CD4-positive, alpha-beta T cell (primary cell): ENCODE measurements at regions of chr9 and their contacts with region 1.

Region 1: DNA sequence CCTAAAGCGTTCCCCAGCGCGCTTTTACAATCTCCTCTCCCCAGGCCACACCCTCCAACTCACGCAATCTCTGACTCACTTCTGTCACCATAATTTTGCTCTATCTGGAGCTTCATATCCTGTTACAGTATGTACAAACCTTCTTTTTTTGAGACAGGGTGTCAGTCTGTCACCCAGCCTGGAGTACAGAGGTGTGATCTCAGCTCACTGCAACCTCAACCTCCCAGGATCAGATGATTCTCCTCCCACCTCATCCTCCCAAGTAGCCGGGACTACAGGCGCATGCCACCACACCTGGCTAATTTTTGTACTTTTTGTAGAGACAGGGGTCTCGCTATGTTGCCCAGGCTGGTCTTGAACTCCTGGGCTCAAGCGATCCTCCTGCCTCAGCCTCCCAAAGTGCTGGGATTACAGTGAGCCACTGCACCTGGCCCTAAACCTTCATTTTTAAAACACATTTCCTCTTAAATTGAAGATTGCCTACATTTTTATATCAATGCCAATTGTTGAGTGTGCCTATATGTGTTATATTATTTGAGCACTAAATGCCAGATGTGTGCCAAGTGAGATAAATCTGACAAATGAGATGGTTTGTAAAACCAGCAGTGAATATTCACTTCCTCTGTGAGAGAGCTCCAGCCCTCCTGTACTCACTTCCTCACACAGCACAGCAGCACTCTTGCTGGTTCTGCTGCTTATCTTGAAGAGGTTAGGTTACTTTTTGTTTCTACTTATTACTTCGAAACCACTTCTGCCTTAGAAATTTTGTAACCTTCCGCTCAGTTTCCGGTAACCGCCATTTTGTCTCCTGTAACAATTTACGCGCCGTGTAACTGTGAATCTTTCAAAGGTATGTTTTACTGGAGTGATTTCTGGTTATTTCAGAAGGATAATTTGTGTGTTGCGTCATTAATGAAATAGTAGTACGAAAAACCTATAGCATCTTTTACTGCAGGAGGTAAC is 57.9 kb downstream of the DOCK8 start:
- DNase-seq: peak; percentile 56 to 92 (median 69)
- ATAC-seq: peak; percentile 83
- H3K4me3 ChIP-seq: peak overlapping the region; percentile 76
- H3K4me3 Mint-ChIP-seq: peak overlapping the region; percentile 92
- H3K27ac ChIP-seq: peak overlapping the region; percentile 94 to 95
- H3K27ac Mint-ChIP-seq: no peak overlapping the region
- H3K4me1 ChIP-seq: peaks cover 55% of the 10 kb centered on the region
- H3K4me1 Mint-ChIP-seq: peaks cover 57% of the 10 kb centered on the region
- H3K27me3 ChIP-seq: no peaks in the 10 kb centered on the region
- H3K27me3 Mint-ChIP-seq: no peaks in the 10 kb centered on the region
- CTCF ChIP-seq: no peak

Region 2: DNA sequence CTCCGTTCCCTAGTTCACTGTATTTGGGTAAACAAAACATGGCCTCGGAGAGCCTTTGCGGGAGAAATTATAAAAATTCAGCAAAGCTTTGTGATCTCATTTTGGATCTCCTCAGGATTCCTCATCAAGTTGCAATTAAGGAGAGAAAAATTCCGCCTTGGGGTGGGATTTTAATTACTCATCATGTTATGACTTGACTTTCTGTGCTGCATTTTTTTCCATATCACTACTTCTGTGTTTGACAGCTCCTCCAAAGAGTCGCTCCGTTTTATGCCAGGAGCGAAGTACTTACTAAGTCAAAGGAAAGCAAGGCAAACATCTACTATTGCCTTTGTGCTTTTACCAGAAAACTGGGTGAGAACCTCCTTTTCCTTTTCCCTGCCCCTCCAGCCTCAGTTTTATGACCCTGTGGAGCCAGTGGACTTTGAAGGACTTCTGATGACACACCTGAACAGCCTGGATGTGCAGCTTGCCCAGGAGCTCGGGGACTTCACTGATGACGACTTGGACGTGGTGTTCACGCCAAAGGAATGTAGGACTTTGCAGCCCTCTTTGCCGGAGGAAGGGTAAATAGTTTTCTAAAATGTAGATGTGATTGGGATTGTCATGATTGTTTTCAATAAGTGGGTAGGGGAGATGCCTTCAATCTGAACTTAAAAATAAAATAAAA is 13.7 kb after region 1 on chr9:
- CTCF ChIA-PET with region 1: interaction called, 5 read pairs
- POLR2A ChIA-PET with region 1: interaction called, 13 read pairs
- intact Hi-C with region 1: loop called in 1 of 2 experiments (anchors 1 kb)
- DNase-seq: no peak
- ATAC-seq: no peak
- H3K4me3 ChIP-seq: no peak overlapping the region
- H3K4me3 Mint-ChIP-seq: no peak overlapping the region
- H3K27ac ChIP-seq: no peak overlapping the region
- H3K27ac Mint-ChIP-seq: peak overlapping the region; percentile 47
- H3K4me1 ChIP-seq: peaks cover 24% of the 10 kb centered on the region
- H3K4me1 Mint-ChIP-seq: peaks cover 94% of the 10 kb centered on the region
- H3K27me3 ChIP-seq: no peaks in the 10 kb centered on the region
- H3K27me3 Mint-ChIP-seq: no peaks in the 10 kb centered on the region
- CTCF ChIP-seq: no peak